K562 (cell line): ENCODE measurements at regions of chrX and their contacts with region 1.

Region 1: GRCh38 chrX:85052636-85053343 is 49.1 kb downstream of the APOOL start:
- DNase-seq: peak in 1 of 4 experiments; percentile 2
- ATAC-seq: no peak
- H3K4me3 ChIP-seq: no peak overlapping the region
- H3K27ac ChIP-seq: no peak overlapping the region
- H3K4me1 ChIP-seq: no peaks in the 10 kb centered on the region
- H3K27me3 ChIP-seq: no peaks in the 10 kb centered on the region
- CTCF ChIP-seq: peak in 1 of 3 experiments; percentile 41; a peak in 2 of 6 replicates
- EP300 ChIP-seq: no peak
- POLR2A ChIP-seq: no peak
- RAD21 ChIP-seq: peak in 1 of 2 experiments; percentile 52; a peak in 3 of 4 replicates

Region 2: GRCh38 chrX:84046403-84046984 is 1006.3 kb before region 1 on chrX:
- CTCF ChIA-PET with region 1: no interaction called
- POLR2A ChIA-PET with region 1: no interaction called
- in situ Hi-C with region 1: no loop called
- intact Hi-C with region 1: loop called (anchors 10 kb)
- DNase-seq: peak in 3 of 4 experiments; percentile 4 to 25 (median 9)
- ATAC-seq: 0 out of 3 replicates have a peak, but pooled peaks have one; percentile 34
- H3K4me3 ChIP-seq: no peak overlapping the region
- H3K27ac ChIP-seq: no peak overlapping the region
- H3K4me1 ChIP-seq: no peaks in the 10 kb centered on the region
- H3K27me3 ChIP-seq: no peaks in the 10 kb centered on the region
- CTCF ChIP-seq: peak; percentile 44 to 50 (median 50)
- EP300 ChIP-seq: no peak
- POLR2A ChIP-seq: no peak
- RAD21 ChIP-seq: peak in 1 of 2 experiments; percentile 32; a peak in 3 of 4 replicates

Region 3: GRCh38 chrX:85326234-85327059 is 273.7 kb after region 1 on chrX:
- CTCF ChIA-PET with region 1: no interaction called
- POLR2A ChIA-PET with region 1: no interaction called
- in situ Hi-C with region 1: no loop called
- intact Hi-C with region 1: no loop called
- DNase-seq: no peak
- ATAC-seq: no peak
- H3K4me3 ChIP-seq: no peak overlapping the region
- H3K27ac ChIP-seq: no peak overlapping the region
- H3K4me1 ChIP-seq: no peaks in the 10 kb centered on the region
- H3K27me3 ChIP-seq: no peaks in the 10 kb centered on the region
- CTCF ChIP-seq: no peak
- EP300 ChIP-seq: no peak
- POLR2A ChIP-seq: no peak
- RAD21 ChIP-seq: no peak